Activated T-helper 1 cell treated with anti-CD3 and anti-CD28 coated beads, Interleukin-12 subunit alpha, Interleukin-12 subunit beta, Interleukin-2, Interleukin-4 antibody, amounts not matched to agents 30 ng/mL and 10 ng/mL and 1 ng/mL, durations not matched to agents 14 hours and 24 hours and 36 hours (primary cell): ENCODE measurements at regions of chrX and their contacts with region 1.

Region 1: GRCh38 chrX:149631234-149632165 is at the start of gene TMEM185A:
- DNase-seq: peak; percentile 73
- H3K4me3 Mint-ChIP-seq: peak within 1 kb of the TSS; percentile 95
- H3K27ac Mint-ChIP-seq: peak within 1 kb of the TSS; percentile 85
- H3K4me1 Mint-ChIP-seq: peaks cover 43% of the 10 kb centered on the region
- H3K27me3 Mint-ChIP-seq: peaks cover 1% of the 10 kb centered on the region
- total RNA-seq, gene TMEM185A: 18.7 and 25.5 TPM in 2 replicates

Region 2: GRCh38 chrX:149570672-149571071 is 60.8 kb before region 1 on chrX:
- intact Hi-C with region 1: loop called (anchors 10 kb)
- DNase-seq: no peak
- H3K4me3 Mint-ChIP-seq: no peak overlapping the region
- H3K27ac Mint-ChIP-seq: no peak overlapping the region
- H3K4me1 Mint-ChIP-seq: peaks cover 23% of the 10 kb centered on the region
- H3K27me3 Mint-ChIP-seq: peaks cover 2% of the 10 kb centered on the region

Region 3: DNA sequence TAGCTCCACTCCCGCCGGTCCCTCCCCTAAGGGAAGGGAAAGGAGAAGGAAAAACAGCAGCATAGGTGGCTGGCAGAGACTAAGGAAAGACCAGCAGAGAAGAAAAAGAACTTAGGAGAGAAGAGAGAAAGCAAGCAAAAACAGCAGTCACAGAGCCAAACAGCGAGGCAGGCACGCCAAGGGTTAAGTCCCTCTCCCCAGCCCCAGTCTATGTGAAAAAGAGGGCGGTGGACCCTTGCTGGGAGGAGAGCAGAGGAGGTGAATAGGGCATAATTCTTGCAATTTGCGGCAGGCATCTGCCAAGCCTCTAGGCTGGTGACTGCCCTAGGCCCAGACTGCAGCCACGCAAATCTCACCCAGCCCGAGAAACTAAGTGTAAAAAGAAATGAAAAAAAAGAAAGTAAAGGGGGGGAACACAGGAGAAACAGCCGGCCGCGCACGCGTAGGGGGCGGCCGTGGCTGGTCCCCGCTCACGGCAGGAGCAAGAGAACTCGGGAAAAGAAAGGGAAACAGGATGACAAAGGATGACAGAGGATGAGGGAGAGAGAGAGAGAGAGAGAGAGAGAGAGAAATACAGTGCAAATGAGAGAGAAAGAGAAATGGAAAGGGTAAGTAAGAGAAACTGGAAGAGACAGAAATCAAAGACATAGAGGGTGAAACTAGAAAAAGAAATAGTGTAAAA is 198.8 kb after region 1 on chrX:
- intact Hi-C with region 1: loop called (anchors 5 kb)
- DNase-seq: peak; percentile 14
- H3K4me3 Mint-ChIP-seq: peak overlapping the region; percentile 78
- H3K27ac Mint-ChIP-seq: peak overlapping the region; percentile 97
- H3K4me1 Mint-ChIP-seq: peaks cover 61% of the 10 kb centered on the region
- H3K27me3 Mint-ChIP-seq: peaks cover 4% of the 10 kb centered on the region

Region 4: DNA sequence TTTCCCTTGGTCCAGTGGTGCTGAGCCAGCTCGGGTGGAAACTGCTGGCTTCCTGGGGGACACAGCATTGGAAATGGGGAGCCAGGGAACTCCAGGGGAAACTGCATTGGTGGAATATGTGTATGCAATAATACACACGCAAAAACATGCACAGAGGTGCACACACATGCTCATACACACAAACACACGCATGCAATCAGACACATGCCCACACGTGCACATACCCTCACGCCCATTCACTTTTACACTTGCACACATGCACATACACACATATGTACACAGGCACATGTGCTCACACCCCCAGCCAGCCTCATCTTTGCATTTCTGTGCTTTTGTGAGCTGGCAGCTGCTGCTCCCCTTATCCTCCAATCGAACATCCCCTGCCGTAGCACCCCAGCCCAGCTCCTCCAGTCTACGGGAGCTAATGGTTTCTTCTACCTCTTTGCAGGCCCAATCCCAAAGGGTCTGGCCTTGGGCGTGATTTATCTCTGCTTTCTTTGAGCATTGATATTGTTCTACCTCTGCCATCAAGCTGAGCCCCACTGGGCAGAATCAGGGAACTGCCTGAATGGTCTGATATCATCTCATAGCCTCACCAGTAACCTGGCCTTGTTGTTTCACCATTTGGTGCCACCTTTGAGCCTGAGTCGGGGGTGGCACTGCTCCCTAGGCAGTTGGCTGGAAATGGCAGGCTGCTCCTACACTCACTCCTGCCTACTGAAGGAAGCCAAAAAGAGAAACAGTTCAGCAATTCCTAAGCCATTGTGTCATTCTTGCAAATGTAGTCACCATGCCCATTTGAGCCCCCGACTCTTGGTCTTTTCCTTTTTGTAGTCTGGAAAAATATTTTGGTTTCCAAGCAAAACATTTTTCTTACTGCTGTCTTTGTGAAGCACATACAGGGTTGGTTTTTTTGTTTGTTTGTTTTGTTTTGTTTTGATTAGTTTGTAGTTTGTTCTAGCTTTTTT is 627.2 kb after region 1 on chrX:
- intact Hi-C with region 1: no loop called
- DNase-seq: no peak
- H3K4me3 Mint-ChIP-seq: no peak overlapping the region
- H3K27ac Mint-ChIP-seq: no peak overlapping the region
- H3K4me1 Mint-ChIP-seq: no peaks in the 10 kb centered on the region
- H3K27me3 Mint-ChIP-seq: peaks cover 2% of the 10 kb centered on the region

Region 5: GRCh38 chrX:150536455-150537116 is 905.1 kb after region 1 on chrX:
- intact Hi-C with region 1: no loop called
- DNase-seq: no peak
- H3K4me3 Mint-ChIP-seq: no peak overlapping the region
- H3K27ac Mint-ChIP-seq: no peak overlapping the region
- H3K4me1 Mint-ChIP-seq: no peaks in the 10 kb centered on the region
- H3K27me3 Mint-ChIP-seq: peaks cover 2% of the 10 kb centered on the region